B cell (primary cell): ENCODE measurements at regions of chr1 and their contacts with region 1.

Region 1: GRCh38 chr1:180631766-180632325 is at the start of gene XPR1:
- DNase-seq: peak; percentile 99
- ATAC-seq: peak; percentile 94
- H3K4me3 ChIP-seq: peak within 1 kb of the TSS; percentile 66 to 97 (median 93)
- H3K4me3 Mint-ChIP-seq: peak within 1 kb of the TSS; percentile 49
- H3K27ac ChIP-seq: peak within 1 kb of the TSS; percentile 85 to 87
- H3K27ac Mint-ChIP-seq: no peak within 1 kb of the TSS
- H3K4me1 ChIP-seq: peaks cover 16 to 21% of the 10 kb centered on the region in 2 donors
- H3K4me1 Mint-ChIP-seq: peaks cover 19% of the 10 kb centered on the region
- H3K27me3 ChIP-seq: no peaks in the 10 kb centered on the region
- H3K27me3 Mint-ChIP-seq: peaks cover 5% of the 10 kb centered on the region
- CTCF ChIP-seq: no peak
- total RNA-seq, gene XPR1: 22.3 and 22.8 TPM in 2 replicates

Region 2: GRCh38 chr1:179954493-179955297 is 677.2 kb before region 1 on chr1 and contains the start of gene CEP350:
- CTCF ChIA-PET with region 1: no interaction called
- POLR2A ChIA-PET with region 1: no interaction called
- intact Hi-C with region 1: loop called (anchors 10 kb)
- DNase-seq: peak; percentile 99
- ATAC-seq: peak; percentile 90
- H3K4me3 ChIP-seq: peak within 1 kb of the TSS; percentile 49 to 96 (median 92)
- H3K4me3 Mint-ChIP-seq: peak within 1 kb of the TSS; percentile 87
- H3K27ac ChIP-seq: peak within 1 kb of the TSS; percentile 76 to 96
- H3K27ac Mint-ChIP-seq: peak within 1 kb of the TSS; percentile 93
- H3K4me1 ChIP-seq: peaks cover 42 to 46% of the 10 kb centered on the region in 2 donors
- H3K4me1 Mint-ChIP-seq: peaks cover 47% of the 10 kb centered on the region
- H3K27me3 ChIP-seq: no peaks in the 10 kb centered on the region
- H3K27me3 Mint-ChIP-seq: no peaks in the 10 kb centered on the region
- CTCF ChIP-seq: no peak
- total RNA-seq, gene CEP350: 87.4 and 92.3 TPM in 2 replicates

Region 3: DNA sequence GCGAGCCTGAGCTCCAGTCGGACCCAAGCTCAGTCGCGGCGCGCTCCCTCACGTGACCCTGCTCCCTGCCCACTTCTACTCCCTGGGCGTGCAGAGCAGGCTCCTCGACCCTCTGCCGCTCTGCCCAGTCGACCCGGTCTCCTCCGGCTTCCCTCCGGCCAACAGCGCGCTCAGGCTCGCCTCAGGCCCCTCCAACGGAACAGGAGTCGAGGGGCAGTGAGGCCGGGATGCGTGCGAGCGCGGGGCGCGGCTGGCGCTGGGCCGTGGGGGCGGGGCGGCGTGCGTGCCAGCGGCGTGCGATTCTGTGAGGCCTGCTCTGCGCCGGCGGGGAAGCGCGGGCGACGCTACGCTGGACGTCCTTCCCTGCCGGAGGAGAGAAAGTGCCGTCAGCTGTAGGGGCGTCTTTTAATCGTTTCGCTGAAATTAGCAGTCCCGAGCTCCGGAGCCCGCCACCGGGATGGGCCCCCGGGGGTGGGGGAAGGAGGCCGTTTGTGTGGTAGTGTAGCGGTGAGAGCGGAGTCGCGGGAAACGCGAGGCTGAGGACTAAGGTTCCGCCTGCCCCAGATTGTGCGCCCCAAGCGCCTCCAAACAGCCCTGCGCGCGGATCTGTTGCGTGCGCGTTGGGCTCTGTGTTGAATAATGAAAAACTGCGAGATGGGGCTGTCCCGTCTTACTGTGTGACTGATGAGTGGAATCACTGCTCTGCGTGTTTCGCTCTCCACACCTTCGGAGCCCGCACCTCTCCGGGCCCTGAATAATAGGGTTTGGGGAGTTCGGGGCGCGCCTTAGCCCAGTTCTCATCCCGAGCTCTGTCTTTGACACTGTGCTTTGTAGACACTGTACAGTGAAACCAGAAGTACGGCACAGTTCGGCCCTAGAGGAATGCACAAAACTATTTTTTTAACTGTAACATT is 129.2 kb before region 1 on chr1 and contains the start of gene ACBD6:
- CTCF ChIA-PET with region 1: interaction called, 4 read pairs
- POLR2A ChIA-PET with region 1: interaction called, 6 read pairs
- intact Hi-C with region 1: loop called (anchors 1 kb)
- DNase-seq: peak; percentile 92
- ATAC-seq: peak; percentile 82
- H3K4me3 ChIP-seq: peak within 1 kb of the TSS; percentile 69 to 97 (median 84)
- H3K4me3 Mint-ChIP-seq: peak within 1 kb of the TSS; percentile 95
- H3K27ac ChIP-seq: peak within 1 kb of the TSS; percentile 74 to 87
- H3K27ac Mint-ChIP-seq: peak within 1 kb of the TSS; percentile 98
- H3K4me1 ChIP-seq: peaks cover 13 to 19% of the 10 kb centered on the region in 2 donors
- H3K4me1 Mint-ChIP-seq: peaks cover 32% of the 10 kb centered on the region
- H3K27me3 ChIP-seq: no peaks in the 10 kb centered on the region
- H3K27me3 Mint-ChIP-seq: no peaks in the 10 kb centered on the region
- CTCF ChIP-seq: no peak
- total RNA-seq, gene ACBD6: 80.9 and 82.8 TPM in 2 replicates

Region 4: DNA sequence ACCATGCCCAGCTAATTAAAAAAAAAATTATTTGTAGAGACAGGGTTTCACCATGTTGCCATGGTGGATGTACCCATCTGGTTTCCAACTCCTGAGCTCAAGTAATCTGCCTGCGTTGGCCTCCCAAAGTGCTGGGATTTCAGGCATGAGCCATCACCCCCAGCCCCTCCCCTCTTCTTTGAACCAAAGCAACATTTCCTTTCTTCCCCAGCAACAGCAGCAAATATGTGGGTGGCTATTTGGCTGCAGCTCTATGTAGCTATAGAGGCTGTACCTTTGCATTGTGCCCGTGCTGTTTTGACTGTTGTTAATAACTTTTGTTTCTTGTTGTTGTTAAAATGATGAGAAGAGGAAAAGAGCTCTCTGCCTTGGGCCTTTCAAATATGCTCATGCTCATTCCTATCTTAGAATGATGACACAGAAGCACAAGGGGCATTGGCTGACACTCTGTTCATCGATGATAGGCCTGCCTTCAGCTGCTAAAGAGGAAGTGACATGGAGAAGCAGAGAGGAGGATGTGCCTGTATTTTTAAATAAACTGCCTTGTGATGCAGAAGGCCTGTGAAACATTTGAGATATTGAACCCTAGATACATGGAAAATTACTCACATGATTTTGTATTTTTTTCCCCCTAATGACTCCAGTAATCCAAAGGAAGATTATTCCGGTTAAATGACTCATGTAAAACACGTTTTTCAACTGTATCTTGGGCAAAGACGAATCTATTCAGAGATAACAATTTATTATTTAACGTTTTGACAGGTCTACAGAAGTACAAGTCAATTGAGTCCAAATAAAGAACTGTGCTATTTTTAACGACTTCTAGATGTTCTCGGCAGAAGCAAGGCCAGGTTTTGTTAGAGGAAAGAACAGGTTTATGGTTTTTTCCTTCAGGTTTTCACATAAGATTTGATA is 20.6 kb before region 1 on chr1:
- CTCF ChIA-PET with region 1: no interaction called
- POLR2A ChIA-PET with region 1: no interaction called
- intact Hi-C with region 1: no loop called
- DNase-seq: peak; percentile 29
- ATAC-seq: peak; percentile 41
- H3K4me3 ChIP-seq: no peak overlapping the region
- H3K4me3 Mint-ChIP-seq: no peak overlapping the region
- H3K27ac ChIP-seq: peak overlapping the region in 1 of 2 donors; percentile 35
- H3K27ac Mint-ChIP-seq: peak overlapping the region; percentile 1
- H3K4me1 ChIP-seq: peaks cover 0 to 6% of the 10 kb centered on the region in 2 donors
- H3K4me1 Mint-ChIP-seq: peaks cover 9% of the 10 kb centered on the region
- H3K27me3 ChIP-seq: no peaks in the 10 kb centered on the region
- H3K27me3 Mint-ChIP-seq: no peaks in the 10 kb centered on the region
- CTCF ChIP-seq: no peak

Region 5: GRCh38 chr1:180863158-180863775 is 231.4 kb after region 1 on chr1:
- CTCF ChIA-PET with region 1: interaction called, 12 read pairs
- POLR2A ChIA-PET with region 1: no interaction called
- intact Hi-C with region 1: loop called (anchors 10 kb)
- DNase-seq: peak; percentile 64
- ATAC-seq: no peak
- H3K4me3 ChIP-seq: no peak overlapping the region
- H3K4me3 Mint-ChIP-seq: no peak overlapping the region
- H3K27ac ChIP-seq: no peak overlapping the region
- H3K27ac Mint-ChIP-seq: no peak overlapping the region
- H3K4me1 ChIP-seq: no peaks in the 10 kb centered on the region
- H3K4me1 Mint-ChIP-seq: no peaks in the 10 kb centered on the region
- H3K27me3 ChIP-seq: no peaks in the 10 kb centered on the region
- H3K27me3 Mint-ChIP-seq: no peaks in the 10 kb centered on the region
- CTCF ChIP-seq: peak; percentile 90

Region 6: DNA sequence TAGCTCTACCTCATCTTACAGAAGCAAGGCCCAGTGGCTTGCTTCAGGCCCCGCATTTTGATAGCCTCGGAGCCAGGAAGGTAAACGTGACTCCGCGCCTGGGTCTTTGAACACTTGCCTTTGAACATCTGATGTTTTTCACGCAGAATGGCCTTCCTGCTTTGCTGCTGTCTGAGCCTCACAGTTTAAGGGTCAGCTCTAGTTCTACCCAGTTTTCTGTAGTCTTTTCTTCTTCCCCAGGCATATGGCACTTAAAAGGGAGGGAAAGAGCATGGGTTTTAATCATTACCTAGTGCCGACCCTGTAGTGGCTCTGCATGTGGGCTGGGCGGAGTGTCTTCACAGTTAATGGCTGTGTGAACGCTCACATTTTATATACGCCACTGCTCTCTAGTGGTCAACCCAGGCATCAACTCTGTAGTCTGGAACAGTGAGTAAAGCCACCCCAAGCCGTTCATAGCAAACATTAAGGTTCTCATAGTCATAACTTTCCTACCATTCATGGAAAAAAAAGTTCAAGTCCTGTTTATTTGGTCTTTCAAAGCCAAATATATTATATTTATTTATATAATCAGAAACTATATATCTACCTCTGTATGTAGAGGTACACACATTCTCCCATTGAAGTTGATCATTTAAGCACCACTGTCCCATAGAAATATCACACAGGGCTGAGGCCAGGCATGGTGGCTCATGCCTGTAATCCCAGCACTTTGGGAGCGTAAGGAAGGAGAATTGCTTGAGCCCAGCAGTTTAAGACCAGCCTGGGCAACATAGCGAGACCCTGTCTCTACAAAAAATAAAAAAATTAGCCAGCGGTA is 534.7 kb after region 1 on chr1:
- CTCF ChIA-PET with region 1: no interaction called
- POLR2A ChIA-PET with region 1: no interaction called
- intact Hi-C with region 1: loop called (anchors 5 kb)
- DNase-seq: peak; percentile 82
- ATAC-seq: peak; percentile 99
- H3K4me3 ChIP-seq: no peak overlapping the region
- H3K4me3 Mint-ChIP-seq: no peak overlapping the region
- H3K27ac ChIP-seq: no peak overlapping the region
- H3K27ac Mint-ChIP-seq: no peak overlapping the region
- H3K4me1 ChIP-seq: peaks cover 2 to 6% of the 10 kb centered on the region in 2 donors
- H3K4me1 Mint-ChIP-seq: peaks cover 3% of the 10 kb centered on the region
- H3K27me3 ChIP-seq: peaks cover 0 to 2% (median 0%) of the 10 kb centered on the region in 4 experiments
- H3K27me3 Mint-ChIP-seq: no peaks in the 10 kb centered on the region
- CTCF ChIP-seq: peak; percentile 94

Region 7: GRCh38 chr1:182391362-182392044 is 1759.7 kb after region 1 on chr1 and contains the start of gene GLUL:
- CTCF ChIA-PET with region 1: no interaction called
- POLR2A ChIA-PET with region 1: no interaction called
- intact Hi-C with region 1: loop called (anchors 5 kb)
- DNase-seq: peak; percentile 81
- ATAC-seq: peak; percentile 80
- H3K4me3 ChIP-seq: peak within 1 kb of the TSS; percentile 64 to 76 (median 71)
- H3K4me3 Mint-ChIP-seq: peak within 1 kb of the TSS; percentile 97
- H3K27ac ChIP-seq: peak within 1 kb of the TSS; percentile 54 to 62
- H3K27ac Mint-ChIP-seq: peak within 1 kb of the TSS; percentile 96
- H3K4me1 ChIP-seq: peaks cover 20 to 34% of the 10 kb centered on the region in 2 donors
- H3K4me1 Mint-ChIP-seq: peaks cover 32% of the 10 kb centered on the region
- H3K27me3 ChIP-seq: peaks cover 0 to 15% (median 6%) of the 10 kb centered on the region in 4 experiments
- H3K27me3 Mint-ChIP-seq: peaks cover under 1% of the 10 kb centered on the region
- CTCF ChIP-seq: no peak
- total RNA-seq, gene GLUL: 44.2 and 53.7 TPM in 2 replicates